A549 (cell line): ENCODE measurements at regions of chr2 and their contacts with region 1.

Region 1: DNA sequence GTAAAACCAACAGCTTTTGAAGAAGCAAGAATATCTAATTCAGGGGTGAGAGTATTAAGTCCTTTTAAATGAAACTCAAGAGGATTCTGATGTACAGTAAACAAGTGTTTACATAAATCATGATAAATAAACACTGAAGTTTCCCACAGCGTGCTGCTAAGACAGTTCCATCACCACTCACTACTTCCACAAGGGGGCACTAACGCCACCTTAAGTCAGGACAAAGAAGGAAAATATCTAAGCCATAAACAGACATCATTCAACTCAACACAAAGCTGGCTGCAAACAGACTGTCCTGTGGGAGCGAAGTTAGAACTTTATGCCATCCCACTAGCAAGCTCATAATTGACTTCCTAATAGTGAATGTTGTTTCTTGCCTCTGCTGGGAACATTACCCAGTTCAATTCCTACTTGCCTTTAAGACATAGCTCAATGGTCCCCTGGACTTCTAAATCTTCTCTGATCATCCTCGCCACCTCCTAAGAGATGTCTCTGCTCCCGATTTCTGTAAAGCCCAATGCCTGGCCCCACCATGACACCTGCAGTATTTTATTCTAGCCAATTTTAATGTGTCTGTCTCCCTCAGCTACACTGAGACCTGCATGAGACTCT is 36.5 kb downstream of the MRPL44 start:
- DNase-seq: peak; percentile 65 to 88
- ATAC-seq: peak; percentile 83 to 90
- H3K4me3 ChIP-seq: no peak overlapping the region
- H3K27ac ChIP-seq: peak overlapping the region in 1 of 2 experiments; percentile 2; a peak in 1 of 6 replicates
- H3K4me1 ChIP-seq: peaks cover 19% of the 10 kb centered on the region; the same call in 2 of the 3 replicates
- CTCF ChIP-seq: peak; percentile 85
- EP300 ChIP-seq: no peak
- POLR2A ChIP-seq: no peak
- RAD21 ChIP-seq: peak; percentile 92 to 94

Region 2: DNA sequence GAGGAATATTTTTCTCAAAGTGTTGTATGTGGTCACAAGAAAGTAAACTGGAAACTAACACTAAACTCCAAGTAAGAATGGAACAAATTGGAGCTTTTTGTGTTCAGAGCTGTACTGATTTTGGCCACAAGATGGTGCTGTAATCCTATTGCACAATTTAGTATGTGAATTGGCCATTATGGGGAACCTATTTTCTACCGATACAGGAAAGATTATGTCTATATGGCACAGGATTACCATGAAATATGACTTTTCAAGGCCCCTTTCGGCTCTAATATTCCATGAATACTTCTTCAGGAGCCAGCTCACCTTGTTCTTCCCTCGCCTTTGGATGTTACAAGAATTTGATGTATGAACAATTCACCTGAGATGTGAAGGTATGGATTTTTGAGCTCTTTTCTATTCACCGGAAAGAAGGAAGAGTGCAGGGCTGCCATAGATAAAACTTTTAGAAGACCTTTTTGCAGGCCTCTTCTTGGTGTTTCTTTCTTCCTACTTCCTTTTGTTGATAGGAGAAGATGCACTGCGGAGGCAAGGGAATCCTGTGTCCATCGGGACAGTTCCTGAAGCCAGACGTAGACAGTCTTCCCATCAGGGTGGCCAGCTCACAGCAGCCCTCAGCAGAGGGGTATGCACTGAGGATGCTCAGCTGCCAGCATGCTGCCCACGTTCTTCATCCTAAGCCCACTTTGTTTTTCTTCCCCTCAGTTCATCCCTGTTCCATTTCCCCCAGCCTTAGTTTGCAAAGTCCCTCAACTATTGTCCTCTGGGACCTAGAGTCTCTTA is 23.2 kb before region 1 on chr2:
- CTCF ChIA-PET with region 1: interaction called, 54 read pairs
- POLR2A ChIA-PET with region 1: no interaction called
- DNase-seq: peak in 1 of 2 experiments; percentile 64
- ATAC-seq: peak; percentile 74 to 83; a peak in 5 of 6 replicates
- H3K4me3 ChIP-seq: no peak overlapping the region
- H3K27ac ChIP-seq: no peak overlapping the region
- H3K4me1 ChIP-seq: no peaks in the 10 kb centered on the region
- CTCF ChIP-seq: peak; percentile 96
- EP300 ChIP-seq: no peak
- POLR2A ChIP-seq: no peak
- RAD21 ChIP-seq: peak; percentile 93 to 96

Region 3: GRCh38 chr2:224017957-224018356 is 24.2 kb after region 1 on chr2:
- CTCF ChIA-PET with region 1: interaction called, 15 read pairs
- POLR2A ChIA-PET with region 1: no interaction called
- DNase-seq: no peak
- ATAC-seq: no peak
- H3K4me3 ChIP-seq: no peak overlapping the region
- H3K27ac ChIP-seq: no peak overlapping the region
- H3K4me1 ChIP-seq: peaks cover 7% of the 10 kb centered on the region
- CTCF ChIP-seq: no peak
- EP300 ChIP-seq: no peak
- POLR2A ChIP-seq: no peak
- RAD21 ChIP-seq: no peak

Region 4: GRCh38 chr2:224039124-224039940 is 45.6 kb after region 1 on chr2 and contains the start of gene SERPINE2:
- CTCF ChIA-PET with region 1: interaction called, 20 read pairs
- POLR2A ChIA-PET with region 1: interaction called, 12 read pairs
- DNase-seq: peak; percentile 82 to 91
- ATAC-seq: peak; percentile 88 to 89
- H3K4me3 ChIP-seq: peak within 1 kb of the TSS; percentile 76
- H3K27ac ChIP-seq: peak within 1 kb of the TSS; percentile 90 to 93
- H3K4me1 ChIP-seq: peaks cover 22% of the 10 kb centered on the region
- CTCF ChIP-seq: peak; percentile 76
- EP300 ChIP-seq: no peak
- POLR2A ChIP-seq: peak; percentile 95
- RAD21 ChIP-seq: peak; percentile 94 to 98
- polyA plus RNA-seq, gene SERPINE2: 58.6 and 94.6 TPM in 2 replicates

Region 5: DNA sequence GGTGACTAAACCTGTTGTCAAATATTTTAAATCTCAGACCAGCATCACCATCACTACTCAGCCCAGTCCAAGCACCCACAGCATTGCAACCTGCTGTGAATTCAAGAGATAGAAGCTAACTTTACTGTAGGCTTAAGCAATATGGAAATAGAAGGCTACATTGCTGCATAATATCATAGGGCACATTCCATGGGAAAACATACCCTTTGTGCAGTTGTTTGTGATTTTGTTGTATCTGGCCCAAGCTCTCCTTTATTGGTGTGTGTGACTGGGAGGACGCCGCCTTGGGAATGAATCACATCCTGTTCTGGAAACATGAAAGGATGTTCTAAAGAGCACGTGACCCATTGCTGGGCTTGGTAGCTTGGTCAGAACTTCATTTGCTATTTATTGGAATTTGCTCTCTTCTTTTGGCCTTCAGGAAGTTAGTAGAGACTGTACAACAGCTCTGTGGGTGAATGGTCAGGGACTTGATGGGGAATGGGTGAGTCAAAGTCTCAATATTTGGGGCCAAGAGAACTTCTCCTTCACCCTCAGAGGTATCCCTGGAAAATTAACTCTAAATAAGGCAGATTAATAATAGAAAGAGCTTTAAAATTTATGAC is 152.1 kb after region 1 on chr2:
- CTCF ChIA-PET with region 1: interaction called, 18 read pairs
- POLR2A ChIA-PET with region 1: no interaction called
- DNase-seq: peak; percentile 35 to 83
- ATAC-seq: peak; percentile 75 to 78
- H3K4me3 ChIP-seq: no peak overlapping the region
- H3K27ac ChIP-seq: peak overlapping the region; percentile 67 to 74
- H3K4me1 ChIP-seq: peaks cover 67% of the 10 kb centered on the region
- CTCF ChIP-seq: no peak
- EP300 ChIP-seq: no peak; a peak in 2 of 5 replicates
- POLR2A ChIP-seq: no peak
- RAD21 ChIP-seq: no peak; a peak in 1 of 5 replicates

Region 6: GRCh38 chr2:224369028-224369632 is 375.4 kb after region 1 on chr2:
- CTCF ChIA-PET with region 1: interaction called, 19 read pairs
- POLR2A ChIA-PET with region 1: no interaction called
- DNase-seq: peak; percentile 15 to 47
- ATAC-seq: peak; percentile 64 to 78; a peak in 3 of 6 replicates
- H3K4me3 ChIP-seq: no peak overlapping the region
- H3K27ac ChIP-seq: no peak overlapping the region
- H3K4me1 ChIP-seq: no peaks in the 10 kb centered on the region
- CTCF ChIP-seq: peak; percentile 84
- EP300 ChIP-seq: no peak
- POLR2A ChIP-seq: no peak
- RAD21 ChIP-seq: peak; percentile 64 to 74